ENCODE measurements at regions of chr21 and their contacts with region 1.

Region 1: DNA sequence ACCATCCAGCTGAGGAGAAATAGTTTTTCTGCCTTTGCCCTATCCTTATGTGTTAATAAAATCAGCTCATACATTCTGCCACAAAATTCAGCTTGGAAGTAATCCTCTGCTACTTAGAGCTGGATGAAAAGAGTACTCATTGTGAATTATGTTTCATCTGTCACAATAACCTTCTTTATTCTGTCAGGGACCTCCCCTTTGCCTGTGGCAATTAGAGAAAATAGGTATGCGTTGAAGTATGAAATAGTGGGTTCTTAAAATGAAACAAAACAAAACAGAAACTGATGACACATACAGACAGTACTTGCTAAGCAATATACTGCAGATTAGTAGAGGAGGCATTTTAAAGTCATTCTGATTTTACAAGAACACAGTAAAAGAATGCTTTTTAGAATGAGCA is 578.5 kb downstream of the USP25 start:
- DNase-seq: no peak
- H3K4me3 ChIP-seq: peak overlapping the region; percentile 15 to 67 (median 52)
- H3K27ac ChIP-seq: peak overlapping the region; percentile 54 to 93 (median 88)
- H3K27me3 ChIP-seq: no peaks in the 10 kb centered on the region
- CTCF ChIP-seq: no peak

Region 2: GRCh38 chr21:16082038-16082816 is 226.0 kb before region 1 on chr21:
- intact Hi-C with region 1: loop called in 1 of 2 experiments (anchors 2 kb)
- DNase-seq: no peak
- H3K4me3 ChIP-seq: peak overlapping the region in 56 of 59 donors; percentile 0 to 60 (median 38)
- H3K27ac ChIP-seq: peak overlapping the region; percentile 49 to 99 (median 97)
- H3K27me3 ChIP-seq: no peaks in the 10 kb centered on the region
- CTCF ChIP-seq: peak; percentile 42 to 90 (median 67)

Region 3: DNA sequence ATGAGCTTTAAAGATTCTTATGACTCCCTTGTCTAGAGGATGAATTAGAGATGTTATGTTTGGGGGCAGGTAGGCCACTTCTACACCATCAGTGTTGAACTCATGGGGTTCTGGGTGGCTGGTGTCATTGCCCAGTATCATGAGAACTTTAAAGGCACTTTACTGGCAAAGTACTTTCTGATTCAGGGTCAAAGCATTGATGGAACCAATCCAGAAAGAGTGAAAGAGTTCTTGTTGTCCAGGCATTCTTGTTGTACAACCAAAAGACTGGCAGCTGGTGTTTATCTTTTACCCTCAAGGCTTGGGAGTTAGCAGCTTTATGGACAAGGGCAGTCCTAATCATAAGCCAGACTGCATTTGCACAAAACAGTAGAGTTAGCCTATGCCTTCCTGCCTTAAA is 94.5 kb after region 1 on chr21:
- intact Hi-C with region 1: no loop called
- DNase-seq: no peak
- H3K4me3 ChIP-seq: no peak overlapping the region
- H3K27ac ChIP-seq: peak overlapping the region in 11 of 59 donors; percentile 0 to 67 (median 48)
- H3K27me3 ChIP-seq: no peaks in the 10 kb centered on the region
- CTCF ChIP-seq: no peak